ENCODE measurements at regions of chr3 and their contacts with region 1.

Region 1: GRCh38 chr3:150703299-150704134 is at the start of gene ERICH6:
- DNase-seq: peak; percentile 55
- ATAC-seq: peak; percentile 100
- H3K4me3 ChIP-seq: peak within 1 kb of the TSS; percentile 62
- H3K27ac ChIP-seq: peak within 1 kb of the TSS; percentile 63
- H3K4me1 ChIP-seq: peaks cover 5% of the 10 kb centered on the region
- H3K27me3 ChIP-seq: no peaks in the 10 kb centered on the region
- CTCF ChIP-seq: peak; percentile 5 to 23 (median 9); a peak in 2 of 6 replicates
- EP300 ChIP-seq: peak in 1 of 2 experiments; percentile 46; a peak in 1 of 4 replicates
- POLR2A ChIP-seq: peak; percentile 80
- RAD21 ChIP-seq: no peak
- polyA plus RNA-seq, gene ERICH6: 0.40 TPM in 1 of 2 experiments, not detected in the other

Region 2: GRCh38 chr3:150083655-150084042 is 619.9 kb before region 1 on chr3:
- CTCF ChIA-PET with region 1: no interaction called
- POLR2A ChIA-PET with region 1: no interaction called
- RAD21 ChIA-PET with region 1: no interaction called
- SMC1A ChIA-PET with region 1: no interaction called
- in situ Hi-C with region 1: no loop called
- intact Hi-C with region 1: no loop called
- DNase-seq: no peak
- ATAC-seq: no peak
- H3K4me3 ChIP-seq: no peak overlapping the region
- H3K27ac ChIP-seq: no peak overlapping the region
- H3K4me1 ChIP-seq: no peaks in the 10 kb centered on the region
- H3K27me3 ChIP-seq: no peaks in the 10 kb centered on the region
- CTCF ChIP-seq: no peak
- EP300 ChIP-seq: no peak
- POLR2A ChIP-seq: no peak
- RAD21 ChIP-seq: no peak

Region 3: GRCh38 chr3:150132101-150132749 is 571.3 kb before region 1 on chr3:
- CTCF ChIA-PET with region 1: no interaction called
- POLR2A ChIA-PET with region 1: no interaction called
- RAD21 ChIA-PET with region 1: no interaction called
- SMC1A ChIA-PET with region 1: no interaction called
- in situ Hi-C with region 1: no loop called
- intact Hi-C with region 1: no loop called
- DNase-seq: no peak
- ATAC-seq: peak; percentile 94
- H3K4me3 ChIP-seq: no peak overlapping the region; the same call in 1 of the 2 replicates
- H3K27ac ChIP-seq: no peak overlapping the region
- H3K4me1 ChIP-seq: peaks cover 6% of the 10 kb centered on the region
- H3K27me3 ChIP-seq: no peaks in the 10 kb centered on the region
- CTCF ChIP-seq: no peak
- EP300 ChIP-seq: no peak
- POLR2A ChIP-seq: no peak
- RAD21 ChIP-seq: no peak

Region 4: GRCh38 chr3:150681057-150681456 is 22.5 kb before region 1 on chr3:
- CTCF ChIA-PET with region 1: interaction called, 3 read pairs
- POLR2A ChIA-PET with region 1: interaction called, 3 read pairs
- RAD21 ChIA-PET with region 1: interaction called, 3 read pairs
- SMC1A ChIA-PET with region 1: interaction called, 17 read pairs
- in situ Hi-C with region 1: no loop called
- intact Hi-C with region 1: no loop called
- DNase-seq: peak; percentile 48
- ATAC-seq: peak; percentile 99
- H3K4me3 ChIP-seq: 0 out of 2 replicates have a peak overlapping the region, but pooled peaks have one; percentile 4
- H3K27ac ChIP-seq: peak overlapping the region; percentile 46; the same call in 1 of the 2 replicates
- H3K4me1 ChIP-seq: peaks cover 13% of the 10 kb centered on the region
- H3K27me3 ChIP-seq: no peaks in the 10 kb centered on the region
- CTCF ChIP-seq: no peak
- EP300 ChIP-seq: peak in 1 of 2 experiments; percentile 54; a peak in 1 of 4 replicates
- POLR2A ChIP-seq: no peak
- RAD21 ChIP-seq: no peak